Heart right ventricle (tissue), 16 donors: ENCODE measurements at regions of chr11 and their contacts with region 1.

Region 1: GRCh38 chr11:6022956-6023355 is 7.6 kb downstream of the OR56A1 start:
- DNase-seq: peak in 1 of 2 donors; percentile 51
- ATAC-seq: peak in 7 of 8 donors; percentile 65 to 83 (median 73)
- H3K4me3 ChIP-seq: no peak overlapping the region
- H3K27ac ChIP-seq: no peak overlapping the region
- H3K4me1 ChIP-seq: no peaks in the 10 kb centered on the region
- H3K27me3 ChIP-seq: no peaks in the 10 kb centered on the region
- CTCF ChIP-seq: peak; percentile 18 to 82 (median 66)

Region 2: GRCh38 chr11:6077723-6078122 is 54.8 kb after region 1 on chr11:
- intact Hi-C with region 1: no loop called
- DNase-seq: no peak
- ATAC-seq: no peak
- H3K4me3 ChIP-seq: no peak overlapping the region
- H3K27ac ChIP-seq: no peak overlapping the region
- H3K4me1 ChIP-seq: no peaks in the 10 kb centered on the region
- H3K27me3 ChIP-seq: no peaks in the 10 kb centered on the region
- CTCF ChIP-seq: no peak

Region 3: DNA sequence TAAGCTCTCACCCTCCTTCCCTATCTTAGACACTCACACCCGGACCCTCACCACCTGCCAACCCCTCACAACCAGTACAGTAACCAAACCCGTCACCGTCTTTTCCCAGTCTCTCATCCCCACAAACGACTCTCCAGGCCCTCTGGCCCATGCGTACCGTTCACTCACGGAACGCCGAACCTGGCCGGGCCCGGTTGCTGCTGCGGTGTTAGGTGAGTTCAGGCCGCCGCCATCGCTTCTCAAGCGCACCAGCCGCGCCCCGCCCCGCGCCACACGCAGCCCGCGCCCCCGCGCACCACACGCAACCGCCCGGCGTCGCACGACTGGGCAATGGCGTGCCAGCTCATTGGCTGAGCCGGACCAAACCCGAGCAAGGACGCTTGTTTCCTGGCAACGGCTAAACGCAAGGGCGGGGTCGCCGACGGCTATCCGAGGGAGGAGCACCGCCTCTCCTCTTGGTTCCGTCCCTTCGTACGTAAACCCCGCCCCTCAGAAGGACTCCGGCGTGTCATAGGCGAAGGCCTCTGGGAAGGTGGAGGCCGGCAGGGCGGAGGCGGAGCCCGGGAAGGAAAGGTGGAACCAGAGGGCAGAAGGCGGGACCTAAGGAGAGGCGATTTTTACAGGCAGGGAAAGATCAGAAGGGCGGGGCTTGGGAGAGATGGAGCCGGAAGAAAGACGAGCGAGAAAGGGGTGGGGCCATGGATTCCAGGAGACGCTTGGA is 211.6 kb after region 1 on chr11 and contains the start of gene FHIP1B:
- intact Hi-C with region 1: loop called in 1 of 10 experiments (anchors 10 kb)
- DNase-seq: peak; percentile 99 to 100
- ATAC-seq: peak; percentile 97 to 99 (median 98)
- H3K4me3 ChIP-seq: peak within 1 kb of the TSS; percentile 52 to 84 (median 74)
- H3K27ac ChIP-seq: peak within 1 kb of the TSS in 9 of 10 donors; percentile 83 to 92 (median 86)
- H3K4me1 ChIP-seq: peaks cover 3 to 41% (median 21%) of the 10 kb centered on the region in 9 donors
- H3K27me3 ChIP-seq: no peaks in the 10 kb centered on the region
- CTCF ChIP-seq: peak in 2 of 9 donors; percentile 3 to 17
- total RNA-seq, gene FHIP1B: 13.4 to 17.3 (median 14.3) TPM

Region 4: DNA sequence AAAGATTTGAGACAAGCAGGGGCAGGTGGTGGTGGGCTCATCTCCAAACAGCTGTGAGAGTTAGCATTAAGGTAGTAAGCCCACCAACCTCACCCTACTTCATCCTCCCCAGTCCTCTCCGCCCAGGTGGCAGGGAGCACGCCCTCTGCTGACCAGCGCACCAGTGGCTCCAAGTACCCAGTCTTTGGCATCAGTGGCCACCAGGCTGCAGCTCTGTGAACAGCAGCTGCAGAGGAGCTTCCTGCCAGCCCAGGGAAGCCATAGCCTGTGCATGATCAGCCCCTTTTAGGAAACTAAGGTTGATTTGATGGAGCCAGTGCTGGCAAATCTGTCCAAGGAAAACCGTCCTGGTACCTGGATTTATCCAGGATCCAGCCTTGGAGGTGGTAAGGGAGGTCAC is 275.6 kb after region 1 on chr11:
- intact Hi-C with region 1: loop called in 2 of 10 experiments (anchors 5 kb)
- DNase-seq: peak; percentile 33 to 54
- ATAC-seq: peak in 6 of 8 donors; percentile 43 to 88 (median 74)
- H3K4me3 ChIP-seq: no peak overlapping the region
- H3K27ac ChIP-seq: no peak overlapping the region
- H3K4me1 ChIP-seq: no peaks in the 10 kb centered on the region
- H3K27me3 ChIP-seq: no peaks in the 10 kb centered on the region
- CTCF ChIP-seq: peak; percentile 19 to 75 (median 64)

Region 5: DNA sequence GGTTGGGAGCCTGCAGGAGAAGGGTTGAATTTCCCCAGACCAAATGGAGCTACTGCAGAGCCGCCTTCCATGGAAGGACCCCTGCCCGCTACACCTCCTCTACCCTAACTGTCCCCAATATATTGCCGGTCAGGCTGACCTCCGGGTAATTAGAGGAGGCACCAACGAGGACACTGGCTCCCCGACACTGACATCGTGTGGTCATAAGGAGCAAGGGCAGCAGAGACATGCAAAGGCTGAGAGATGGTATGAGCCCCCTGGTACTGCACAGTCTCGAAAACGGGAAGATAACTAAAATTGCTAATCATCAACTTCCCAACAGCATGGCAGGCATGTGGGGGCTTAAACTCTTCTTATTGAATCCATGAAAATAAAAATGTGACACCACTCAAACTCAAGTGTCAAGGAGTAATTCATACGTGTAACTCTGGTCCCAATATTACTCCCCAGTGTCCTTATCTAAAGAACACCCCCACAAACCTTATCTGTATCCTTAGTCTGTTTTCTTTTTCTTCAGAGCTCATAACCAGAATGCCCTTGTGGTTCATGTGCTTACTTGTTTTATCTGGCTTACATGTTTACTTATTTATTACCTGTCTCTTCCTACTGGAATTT is 293.0 kb after region 1 on chr11:
- intact Hi-C with region 1: loop called in 7 of 10 experiments (anchors 2 to 10 kb)
- DNase-seq: peak; percentile 49 to 51
- ATAC-seq: peak in 3 of 8 donors; percentile 11 to 32 (median 17)
- H3K4me3 ChIP-seq: peak overlapping the region in 5 of 10 donors; percentile 15 to 33 (median 22)
- H3K27ac ChIP-seq: peak overlapping the region in 5 of 10 donors; percentile 1 to 100 (median 33)
- H3K4me1 ChIP-seq: peaks cover 6 to 52% (median 33%) of the 10 kb centered on the region in 9 donors
- H3K27me3 ChIP-seq: peaks cover 0 to 21% (median 0%) of the 10 kb centered on the region in 7 donors
- CTCF ChIP-seq: peak; percentile 77 to 94 (median 88)